ENCODE measurements at regions of chr13 and their contacts with region 1.

Region 1: DNA sequence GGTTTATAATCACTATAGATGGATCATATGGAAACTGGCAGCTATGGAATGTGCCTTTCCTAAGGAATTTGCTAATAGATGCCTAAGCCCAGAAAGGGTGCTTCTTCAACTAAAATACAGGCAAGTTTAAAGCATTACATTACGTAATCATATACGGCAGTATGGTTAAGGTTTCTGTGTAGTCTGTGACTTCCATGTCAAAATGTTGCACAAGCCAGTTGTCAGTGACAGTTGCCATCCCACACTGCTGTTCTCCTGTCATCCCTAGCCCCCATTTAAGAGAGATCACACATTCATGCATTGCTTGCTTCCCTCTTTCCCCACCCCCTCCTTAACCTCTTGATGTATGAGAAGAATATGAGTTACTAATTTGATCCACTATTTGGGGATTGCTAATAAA is 47.3 kb downstream of the BRCA2 start:
- DNase-seq: no peak
- H3K4me3 ChIP-seq: no peak overlapping the region
- H3K4me3 Mint-ChIP-seq: no peak overlapping the region
- H3K27ac Mint-ChIP-seq: no peak overlapping the region
- H3K4me1 ChIP-seq: no peaks in the 10 kb centered on the region
- H3K4me1 Mint-ChIP-seq: no peaks in the 10 kb centered on the region
- H3K27me3 ChIP-seq: no peaks in the 10 kb centered on the region
- H3K27me3 Mint-ChIP-seq: no peaks in the 10 kb centered on the region
- CTCF ChIP-seq: no peak

Region 2: GRCh38 chr13:32471187-32471922 is 108.8 kb after region 1 on chr13:
- CTCF ChIA-PET with region 1: no interaction called
- POLR2A ChIA-PET with region 1: no interaction called
- intact Hi-C with region 1: loop called (anchors 1 kb)
- DNase-seq: no peak
- H3K4me3 ChIP-seq: no peak overlapping the region
- H3K4me3 Mint-ChIP-seq: no peak overlapping the region
- H3K27ac Mint-ChIP-seq: no peak overlapping the region
- H3K4me1 ChIP-seq: peaks cover 16% of the 10 kb centered on the region
- H3K4me1 Mint-ChIP-seq: peaks cover 22% of the 10 kb centered on the region
- H3K27me3 ChIP-seq: no peaks in the 10 kb centered on the region
- H3K27me3 Mint-ChIP-seq: no peaks in the 10 kb centered on the region
- CTCF ChIP-seq: no peak

Region 3: GRCh38 chr13:33577007-33577406 is 1214.4 kb after region 1 on chr13:
- CTCF ChIA-PET with region 1: no interaction called
- POLR2A ChIA-PET with region 1: no interaction called
- intact Hi-C with region 1: no loop called
- DNase-seq: no peak
- H3K4me3 ChIP-seq: no peak overlapping the region
- H3K4me3 Mint-ChIP-seq: no peak overlapping the region
- H3K27ac Mint-ChIP-seq: no peak overlapping the region
- H3K4me1 ChIP-seq: no peaks in the 10 kb centered on the region
- H3K4me1 Mint-ChIP-seq: no peaks in the 10 kb centered on the region
- H3K27me3 ChIP-seq: no peaks in the 10 kb centered on the region
- H3K27me3 Mint-ChIP-seq: peaks cover 7% of the 10 kb centered on the region
- CTCF ChIP-seq: no peak

Measured in Caco-2 (cell line).